Dorsolateral prefrontal cortex (tissue), 120 donors: ENCODE measurements at regions of chr6 and their contacts with region 1.

Region 1: GRCh38 chr6:53651764-53652401 is 13.7 kb downstream of the KLHL31 start:
- DNase-seq: peak; percentile 26 to 84 (median 70)
- H3K4me3 ChIP-seq: peak overlapping the region; percentile 58 to 87 (median 71)
- H3K27ac ChIP-seq: peak overlapping the region in 38 of 59 donors; percentile 1 to 77 (median 38)
- H3K27me3 ChIP-seq: no peaks in the 10 kb centered on the region
- CTCF ChIP-seq: peak in 54 of 56 donors; percentile 24 to 77 (median 60)

Region 2: DNA sequence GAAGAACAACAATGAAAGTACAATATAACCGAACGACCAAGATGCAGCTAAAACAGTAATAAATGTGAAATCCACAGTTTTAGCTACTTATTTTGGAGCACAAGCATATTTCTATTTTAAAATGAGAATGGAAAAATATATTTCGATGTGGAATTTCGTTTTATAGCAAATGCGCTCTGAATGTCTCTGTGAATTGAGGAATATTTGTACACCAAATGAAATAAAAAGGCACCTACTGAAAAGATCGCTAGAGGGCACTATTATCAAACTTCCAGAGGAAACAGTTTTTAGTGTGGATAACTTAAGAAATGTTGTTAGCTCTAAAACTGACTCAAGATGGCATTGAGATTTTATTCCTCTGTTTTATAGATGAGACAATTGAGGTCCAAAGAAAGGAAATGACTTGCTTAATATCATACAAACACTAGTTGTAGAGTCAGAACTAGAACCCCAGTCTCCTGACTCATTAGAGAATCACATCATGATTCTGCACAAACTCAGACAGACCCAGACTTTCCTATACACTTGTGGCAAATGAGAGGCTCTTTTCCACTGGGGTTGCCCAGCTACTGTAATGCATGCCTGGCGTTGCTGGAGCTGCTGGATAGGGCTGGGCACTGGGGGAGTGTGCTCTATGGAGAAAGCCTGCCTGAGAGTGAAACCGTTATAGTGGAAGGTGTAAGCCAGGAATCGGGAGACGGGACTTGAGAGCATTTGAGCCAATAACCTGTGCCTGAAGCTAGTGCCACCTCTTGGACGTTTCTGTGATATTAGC is 158.8 kb before region 1 on chr6:
- intact Hi-C with region 1: loop called (anchors 2 to 5 kb)
- DNase-seq: no peak
- H3K4me3 ChIP-seq: peak overlapping the region in 54 of 59 donors; percentile 9 to 64 (median 42)
- H3K27ac ChIP-seq: peak overlapping the region in 18 of 59 donors; percentile 8 to 63 (median 31)
- H3K27me3 ChIP-seq: no peaks in the 10 kb centered on the region
- CTCF ChIP-seq: peak; percentile 61 to 95 (median 86)

Region 3: GRCh38 chr6:53517056-53517455 is 134.8 kb before region 1 on chr6:
- intact Hi-C with region 1: loop called in 1 of 2 experiments (anchors 5 kb)
- DNase-seq: no peak
- H3K4me3 ChIP-seq: no peak overlapping the region
- H3K27ac ChIP-seq: no peak overlapping the region
- H3K27me3 ChIP-seq: no peaks in the 10 kb centered on the region
- CTCF ChIP-seq: no peak

Region 4: DNA sequence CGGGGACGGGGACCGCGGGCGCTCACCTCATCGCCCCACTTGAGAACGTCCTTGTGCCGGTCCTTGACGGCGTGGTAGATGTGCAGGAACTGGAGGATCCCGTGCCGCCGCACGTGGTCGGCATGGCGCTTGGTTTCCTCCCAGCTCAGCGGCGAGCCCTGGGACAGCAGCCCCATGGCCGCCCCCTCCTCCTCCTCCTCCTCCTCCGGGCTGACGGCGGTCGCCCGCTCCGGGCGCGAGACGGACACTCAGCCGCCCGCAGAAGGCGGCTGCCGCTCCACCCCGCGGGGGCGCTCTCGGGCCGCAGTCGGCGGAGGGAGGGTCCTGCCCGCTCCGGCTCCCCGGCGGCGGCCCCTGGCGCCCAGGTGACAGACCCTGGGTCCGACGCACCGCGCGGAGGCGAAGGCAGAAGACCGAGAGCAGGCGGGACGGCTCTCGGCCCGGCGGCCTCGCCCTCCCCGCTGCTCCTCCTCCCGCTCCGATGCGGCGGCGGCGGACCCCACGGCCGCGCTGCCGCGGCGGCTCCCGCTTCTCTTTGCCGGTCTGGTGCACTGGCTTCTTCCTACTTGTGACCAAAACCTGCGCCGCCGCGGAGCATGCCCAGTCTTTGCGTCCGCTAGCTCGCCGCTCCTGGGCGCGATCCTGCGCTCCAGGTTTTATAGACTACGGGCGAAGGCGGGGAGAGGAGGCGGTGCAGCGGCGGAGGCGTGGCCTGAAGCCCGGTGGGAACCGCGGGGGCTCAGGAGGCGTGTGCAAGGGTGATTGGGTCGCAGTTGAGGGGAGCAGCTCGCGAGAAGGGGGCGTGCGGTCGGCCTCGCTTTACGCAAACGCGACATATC is 107.2 kb before region 1 on chr6 and contains the start of gene GCLC:
- intact Hi-C with region 1: loop called (anchors 1 to 2 kb)
- DNase-seq: peak; percentile 87 to 95 (median 91)
- H3K4me3 ChIP-seq: peak within 1 kb of the TSS; percentile 67 to 100 (median 94)
- H3K27ac ChIP-seq: peak within 1 kb of the TSS; percentile 66 to 99 (median 97)
- H3K27me3 ChIP-seq: no peaks in the 10 kb centered on the region
- CTCF ChIP-seq: peak in 55 of 56 donors; percentile 2 to 92 (median 71)
- total RNA-seq, gene GCLC: 28.3 to 113 (median 64.6) TPM

Region 5: DNA sequence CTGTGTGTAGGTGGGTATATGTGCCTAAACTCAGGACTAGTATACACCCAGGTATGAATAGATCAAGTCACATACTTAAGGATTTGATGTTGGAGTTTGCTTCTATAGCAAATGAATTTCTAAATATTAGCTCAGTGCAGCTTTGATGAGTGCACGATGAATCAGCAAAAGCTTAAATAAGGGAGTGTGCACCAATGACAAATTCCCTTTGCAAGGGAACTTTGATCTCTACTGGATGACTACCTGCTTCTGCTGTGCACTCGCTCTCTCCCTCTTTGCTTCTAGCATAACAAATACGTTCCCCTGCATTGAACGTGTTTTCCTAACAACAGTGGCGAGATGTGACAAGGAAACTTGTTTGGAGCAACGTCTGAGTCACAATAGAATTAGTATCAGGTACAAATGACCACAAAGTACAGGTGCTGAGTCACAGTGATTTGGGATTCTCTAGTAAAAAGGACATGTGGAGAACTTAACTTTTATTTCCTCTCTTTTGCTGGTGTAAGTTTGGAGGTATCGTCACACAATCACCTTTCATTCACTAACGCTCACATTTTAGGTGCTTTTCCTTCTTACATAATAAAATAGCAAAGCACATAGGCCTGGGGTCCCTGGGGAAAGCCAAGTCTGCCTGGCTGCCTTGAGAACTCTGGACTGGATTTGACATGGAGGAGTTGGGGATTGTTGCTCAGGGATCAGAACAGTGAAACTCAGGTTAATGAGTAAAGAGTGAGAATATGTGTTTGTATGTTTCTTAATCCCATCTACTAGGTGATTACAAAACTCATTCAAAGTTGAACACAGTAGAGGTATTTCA is 36.0 kb before region 1 on chr6:
- intact Hi-C with region 1: no loop called
- DNase-seq: no peak
- H3K4me3 ChIP-seq: no peak overlapping the region
- H3K27ac ChIP-seq: no peak overlapping the region
- H3K27me3 ChIP-seq: no peaks in the 10 kb centered on the region
- CTCF ChIP-seq: no peak

Region 6: DNA sequence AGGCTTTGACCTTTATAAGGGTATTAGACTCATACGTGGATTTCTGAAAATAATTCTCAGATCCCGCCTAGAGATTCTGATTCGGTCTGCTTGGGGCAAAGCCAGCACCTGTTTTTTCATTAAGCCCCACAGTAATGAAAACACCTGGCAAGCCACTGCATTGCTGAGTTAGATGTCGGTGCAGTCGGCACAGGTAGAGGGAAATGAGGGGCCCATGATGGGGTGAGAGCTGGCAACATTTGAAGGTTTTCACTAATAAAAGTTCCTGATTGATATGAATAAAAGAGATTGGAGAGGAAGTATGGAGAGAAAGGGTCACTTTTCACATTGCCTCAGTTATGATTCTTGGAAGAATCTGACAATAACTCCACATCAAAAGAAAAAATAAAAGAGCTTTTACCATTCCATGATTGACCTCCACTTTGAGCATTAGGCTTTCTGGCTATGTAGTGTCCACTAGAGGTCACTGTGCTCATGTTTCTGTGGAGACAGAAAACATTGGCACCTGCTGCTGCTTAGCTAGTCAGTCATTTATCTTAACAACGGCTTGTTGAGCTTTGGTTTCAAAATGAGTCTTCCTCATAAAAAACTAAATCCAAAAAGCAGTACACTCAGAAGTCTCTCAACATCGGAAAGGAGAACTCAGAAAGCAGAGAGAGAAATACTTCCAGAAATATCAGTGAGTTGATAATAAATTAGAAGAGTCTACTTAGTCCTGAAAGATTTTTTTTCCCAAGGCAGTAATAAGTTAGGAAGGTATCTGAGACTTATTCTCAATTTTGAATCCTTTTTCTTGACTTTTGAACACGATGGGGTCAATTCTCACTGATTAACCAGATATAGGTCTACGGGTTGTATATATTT is 66.9 kb after region 1 on chr6:
- intact Hi-C with region 1: loop called in 1 of 2 experiments (anchors 10 kb)
- DNase-seq: peak in 3 of 10 donors; percentile 15 to 42 (median 37)
- H3K4me3 ChIP-seq: peak overlapping the region in 3 of 59 donors; percentile 14 to 28 (median 24)
- H3K27ac ChIP-seq: no peak overlapping the region
- H3K27me3 ChIP-seq: peaks cover 0 to 4% (median 0%) of the 10 kb centered on the region in 45 donors
- CTCF ChIP-seq: peak; percentile 64 to 91 (median 80)